ENCODE measurements at regions of chr19 and their contacts with region 1.

Region 1: GRCh38 chr19:49676690-49677231 is 310 bp upstream of the PRMT1 start:
- DNase-seq: peak; percentile 84 to 99 (median 97)
- ATAC-seq: peak; percentile 87
- H3K4me3 ChIP-seq: peak overlapping the region; percentile 86
- H3K4me3 Mint-ChIP-seq: peak overlapping the region; percentile 91 to 100 (median 98)
- H3K27ac ChIP-seq: peak overlapping the region; percentile 95
- H3K27ac Mint-ChIP-seq: peak overlapping the region; percentile 93 to 100 (median 99)
- H3K4me1 ChIP-seq: peaks cover 18 to 23% of the 10 kb centered on the region in 2 donors
- H3K4me1 Mint-ChIP-seq: peaks cover 18 to 50% (median 43%) of the 10 kb centered on the region in 7 donors
- H3K27me3 ChIP-seq: no peaks in the 10 kb centered on the region
- H3K27me3 Mint-ChIP-seq: no peaks in the 10 kb centered on the region

Region 2: GRCh38 chr19:49331616-49332055 is 345.1 kb before region 1 on chr19:
- CTCF ChIA-PET with region 1: no interaction called
- POLR2A ChIA-PET with region 1: no interaction called
- intact Hi-C with region 1: loop called in 1 of 2 experiments (anchors 1 kb)
- DNase-seq: peak in 8 of 9 donors; percentile 48 to 76 (median 65)
- ATAC-seq: peak; percentile 83
- H3K4me3 ChIP-seq: no peak overlapping the region
- H3K4me3 Mint-ChIP-seq: peak overlapping the region in 9 of 10 donors; percentile 14 to 99 (median 49)
- H3K27ac ChIP-seq: peak overlapping the region; percentile 4
- H3K27ac Mint-ChIP-seq: peak overlapping the region; percentile 54 to 99 (median 87)
- H3K4me1 ChIP-seq: peaks cover 37 to 44% of the 10 kb centered on the region in 2 donors
- H3K4me1 Mint-ChIP-seq: peaks cover 54 to 80% (median 70%) of the 10 kb centered on the region in 7 donors
- H3K27me3 ChIP-seq: no peaks in the 10 kb centered on the region
- H3K27me3 Mint-ChIP-seq: no peaks in the 10 kb centered on the region

Region 3: DNA sequence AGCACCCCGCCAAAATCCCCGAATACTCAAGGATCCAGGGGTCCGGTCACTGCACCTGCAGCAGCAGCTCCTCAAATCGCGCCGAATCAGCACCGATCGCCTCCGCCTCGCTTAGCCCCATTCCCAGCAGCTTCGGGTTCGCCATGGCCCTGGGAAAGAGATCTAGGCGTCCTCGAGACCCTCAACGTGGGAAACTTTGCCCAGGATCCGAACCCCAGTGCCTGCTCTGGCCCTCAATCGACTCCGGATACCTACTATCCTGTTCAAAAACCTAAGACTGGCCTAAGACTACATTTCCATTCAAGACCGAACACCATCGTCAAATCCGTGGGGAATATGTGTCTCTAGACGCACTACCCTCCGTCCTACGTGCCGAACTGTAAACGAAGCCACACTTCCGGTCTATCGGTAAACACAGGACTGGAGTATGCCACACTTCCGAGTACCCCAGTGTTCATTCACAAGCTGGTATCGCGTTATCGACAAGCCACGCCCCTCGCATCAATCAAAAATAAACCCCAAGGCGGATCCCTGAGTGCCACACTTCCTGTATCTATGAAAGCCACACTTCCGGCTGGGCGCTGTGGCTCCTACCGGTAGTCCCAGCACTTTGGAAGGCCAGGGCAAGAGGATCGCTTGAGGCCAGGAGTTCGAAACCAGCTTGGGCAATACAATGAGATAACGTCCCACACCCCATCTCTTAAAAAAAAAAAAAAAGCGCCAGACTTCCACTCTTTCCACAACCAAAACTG is 225.2 kb before region 1 on chr19 and contains the start of gene PIH1D1:
- CTCF ChIA-PET with region 1: no interaction called
- POLR2A ChIA-PET with region 1: interaction called, 3 read pairs
- intact Hi-C with region 1: loop called (anchors 1 kb)
- DNase-seq: peak; percentile 69 to 97 (median 94)
- ATAC-seq: peak; percentile 71
- H3K4me3 ChIP-seq: peak within 1 kb of the TSS; percentile 85
- H3K4me3 Mint-ChIP-seq: peak within 1 kb of the TSS; percentile 95 to 100 (median 99)
- H3K27ac ChIP-seq: peak within 1 kb of the TSS; percentile 95
- H3K27ac Mint-ChIP-seq: peak within 1 kb of the TSS; percentile 92 to 100 (median 99)
- H3K4me1 ChIP-seq: peaks cover 15 to 26% of the 10 kb centered on the region in 2 donors
- H3K4me1 Mint-ChIP-seq: peaks cover 31 to 68% (median 55%) of the 10 kb centered on the region in 7 donors
- H3K27me3 ChIP-seq: no peaks in the 10 kb centered on the region
- H3K27me3 Mint-ChIP-seq: no peaks in the 10 kb centered on the region
- total RNA-seq, gene PIH1D1: 136 to 183 (median 159) TPM

Region 4: GRCh38 chr19:49502866-49503581 is 173.7 kb before region 1 on chr19:
- CTCF ChIA-PET with region 1: interaction called, 27 read pairs
- POLR2A ChIA-PET with region 1: interaction called, 14 read pairs
- intact Hi-C with region 1: loop called (anchors 1 kb)
- DNase-seq: peak in 5 of 9 donors; percentile 68 to 81 (median 77)
- ATAC-seq: no peak
- H3K4me3 ChIP-seq: no peak overlapping the region
- H3K4me3 Mint-ChIP-seq: peak overlapping the region in 6 of 10 donors; percentile 7 to 96 (median 48)
- H3K27ac ChIP-seq: peak overlapping the region; percentile 99
- H3K27ac Mint-ChIP-seq: peak overlapping the region; percentile 91 to 100 (median 98)
- H3K4me1 ChIP-seq: peaks cover 36% of the 10 kb centered on the region in 2 donors
- H3K4me1 Mint-ChIP-seq: peaks cover 24 to 55% (median 40%) of the 10 kb centered on the region in 7 donors
- H3K27me3 ChIP-seq: no peaks in the 10 kb centered on the region
- H3K27me3 Mint-ChIP-seq: peaks cover 0 to 9% (median 0%) of the 10 kb centered on the region in 5 donors

Region 5: GRCh38 chr19:49590071-49590970 is 86.4 kb before region 1 on chr19:
- CTCF ChIA-PET with region 1: interaction called, 5 read pairs
- POLR2A ChIA-PET with region 1: interaction called, 9 read pairs
- intact Hi-C with region 1: loop called (anchors 1 kb)
- DNase-seq: peak; percentile 85 to 98 (median 97)
- ATAC-seq: peak; percentile 90
- H3K4me3 ChIP-seq: peak overlapping the region; percentile 97
- H3K4me3 Mint-ChIP-seq: peak overlapping the region; percentile 85 to 95 (median 94)
- H3K27ac ChIP-seq: peak overlapping the region; percentile 86
- H3K27ac Mint-ChIP-seq: peak overlapping the region; percentile 76 to 95 (median 93)
- H3K4me1 ChIP-seq: peaks cover 15 to 18% of the 10 kb centered on the region in 2 donors
- H3K4me1 Mint-ChIP-seq: peaks cover 26 to 42% (median 31%) of the 10 kb centered on the region in 7 donors
- H3K27me3 ChIP-seq: no peaks in the 10 kb centered on the region
- H3K27me3 Mint-ChIP-seq: peaks cover 0 to 12% (median 0%) of the 10 kb centered on the region in 5 donors

Region 6: GRCh38 chr19:49718511-49718910 is 41.8 kb after region 1 on chr19:
- CTCF ChIA-PET with region 1: no interaction called
- POLR2A ChIA-PET with region 1: interaction called, 11 read pairs
- intact Hi-C with region 1: no loop called
- DNase-seq: no peak
- ATAC-seq: no peak
- H3K4me3 ChIP-seq: no peak overlapping the region
- H3K4me3 Mint-ChIP-seq: peak overlapping the region; percentile 23 to 96 (median 77)
- H3K27ac ChIP-seq: no peak overlapping the region
- H3K27ac Mint-ChIP-seq: peak overlapping the region; percentile 8 to 97 (median 81)
- H3K4me1 ChIP-seq: peaks cover 6 to 9% of the 10 kb centered on the region in 2 donors
- H3K4me1 Mint-ChIP-seq: peaks cover 7 to 15% (median 11%) of the 10 kb centered on the region in 7 donors
- H3K27me3 ChIP-seq: no peaks in the 10 kb centered on the region
- H3K27me3 Mint-ChIP-seq: no peaks in the 10 kb centered on the region

Measured in naive thymus-derived CD4-positive, alpha-beta T cell (primary cell).